IMR-90 (cell line): ENCODE measurements at regions of chr1 and their contacts with region 1.

Region 1: DNA sequence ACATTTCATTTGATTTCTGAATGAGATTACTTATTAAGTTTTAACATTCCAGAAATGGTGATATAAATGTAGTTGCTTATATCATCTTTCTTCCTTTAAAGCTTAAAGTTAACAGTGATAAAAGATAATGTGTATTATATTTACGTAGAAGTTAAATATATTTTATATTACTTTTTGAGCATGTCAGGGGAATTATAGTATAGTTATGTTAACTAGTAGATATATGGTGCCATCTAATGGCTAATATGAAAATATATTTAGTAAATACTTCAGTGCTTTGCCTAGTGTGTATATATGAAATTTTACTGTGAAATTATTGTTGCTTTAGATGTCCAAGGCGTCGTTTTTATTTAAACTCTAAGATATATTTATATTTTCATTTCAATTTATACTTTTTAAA is 51.5 kb downstream of the SYT14 start:
- DNase-seq: peak; percentile 34
- ATAC-seq: peak; percentile 85
- H3K4me3 ChIP-seq: no peak overlapping the region
- H3K27ac ChIP-seq: no peak overlapping the region
- H3K4me1 ChIP-seq: no peaks in the 10 kb centered on the region
- H3K27me3 ChIP-seq: no peaks in the 10 kb centered on the region
- CTCF ChIP-seq: peak; percentile 53
- POLR2A ChIP-seq: no peak
- RAD21 ChIP-seq: peak; percentile 56

Region 2: DNA sequence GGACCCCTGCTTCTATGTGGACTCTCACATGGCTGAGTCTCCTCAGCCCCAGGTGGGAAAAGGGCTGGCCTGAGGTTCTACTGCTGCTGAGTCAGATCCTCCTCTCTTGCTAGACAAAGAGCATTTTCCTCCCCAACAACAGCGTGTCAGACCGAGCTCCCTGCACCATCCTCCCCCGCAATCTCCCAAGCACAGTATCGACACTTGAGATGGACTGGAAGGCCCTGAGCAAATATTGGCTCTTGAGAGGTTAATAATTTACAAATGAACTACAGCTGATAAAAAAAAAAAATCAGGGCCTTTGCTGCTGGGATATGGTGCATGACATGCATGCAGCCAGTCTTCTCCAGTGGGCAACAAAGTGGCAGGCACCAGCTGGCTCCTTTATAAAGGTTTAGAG is 461.5 kb before region 1 on chr1:
- CTCF ChIA-PET with region 1: no interaction called
- POLR2A ChIA-PET with region 1: no interaction called
- dilution Hi-C with region 1: no loop called
- in situ Hi-C with region 1: no loop called
- intact Hi-C with region 1: no loop called
- DNase-seq: no peak
- ATAC-seq: no peak
- H3K4me3 ChIP-seq: no peak overlapping the region
- H3K27ac ChIP-seq: no peak overlapping the region
- H3K4me1 ChIP-seq: no peaks in the 10 kb centered on the region
- H3K27me3 ChIP-seq: no peaks in the 10 kb centered on the region
- CTCF ChIP-seq: no peak
- POLR2A ChIP-seq: no peak
- RAD21 ChIP-seq: no peak

Region 3: GRCh38 chr1:209805875-209806760 is 183.4 kb before region 1 on chr1 and contains the start of gene IRF6:
- CTCF ChIA-PET with region 1: no interaction called
- POLR2A ChIA-PET with region 1: no interaction called
- dilution Hi-C with region 1: loop called (anchors 25 kb)
- in situ Hi-C with region 1: no loop called
- intact Hi-C with region 1: no loop called
- DNase-seq: peak; percentile 51
- ATAC-seq: peak; percentile 71
- H3K4me3 ChIP-seq: peak within 1 kb of the TSS; percentile 34
- H3K27ac ChIP-seq: peak within 1 kb of the TSS; percentile 19; the same call in 1 of the 2 replicates
- H3K4me1 ChIP-seq: peaks cover 5% of the 10 kb centered on the region; the same call in 1 of the 2 replicates
- H3K27me3 ChIP-seq: peaks cover 2% of the 10 kb centered on the region; the same call in 1 of the 2 replicates
- CTCF ChIP-seq: no peak
- POLR2A ChIP-seq: no peak
- RAD21 ChIP-seq: no peak
- total RNA-seq, gene IRF6: 1.9 and 2.9 TPM in 2 replicates

Region 4: GRCh38 chr1:209875515-209875914 is 114.0 kb before region 1 on chr1:
- CTCF ChIA-PET with region 1: interaction called, 6 read pairs
- POLR2A ChIA-PET with region 1: no interaction called
- dilution Hi-C with region 1: no loop called
- in situ Hi-C with region 1: loop called (anchors 5 kb)
- intact Hi-C with region 1: loop called (anchors 5 kb)
- DNase-seq: peak; percentile 67
- ATAC-seq: peak; percentile 97
- H3K4me3 ChIP-seq: no peak overlapping the region
- H3K27ac ChIP-seq: no peak overlapping the region
- H3K4me1 ChIP-seq: peaks cover 2% of the 10 kb centered on the region; the same call in 1 of the 2 replicates
- H3K27me3 ChIP-seq: no peaks in the 10 kb centered on the region
- CTCF ChIP-seq: peak; percentile 63
- POLR2A ChIP-seq: no peak
- RAD21 ChIP-seq: peak; percentile 64